ENCODE measurements at regions of chr6 and their contacts with region 1.

Region 1: GRCh38 chr6:3068329-3069214 is at the start of gene RIPK1:
- DNase-seq: peak; percentile 95 to 97 (median 96)
- ATAC-seq: peak; percentile 87 to 92 (median 90)
- H3K4me3 ChIP-seq: peak within 1 kb of the TSS; percentile 82 to 100 (median 98)
- H3K27ac ChIP-seq: peak within 1 kb of the TSS; percentile 99 to 100 (median 100)
- H3K4me1 ChIP-seq: peaks cover 5 to 55% (median 33%) of the 10 kb centered on the region in 12 donors
- H3K27me3 ChIP-seq: no peaks in the 10 kb centered on the region
- CTCF ChIP-seq: peak in 9 of 12 donors; percentile 5 to 60 (median 41)
- POLR2A ChIP-seq: peak; percentile 50 to 87
- total RNA-seq, gene RIPK1: 5.3 to 16.3 (median 7.1) TPM

Region 2: DNA sequence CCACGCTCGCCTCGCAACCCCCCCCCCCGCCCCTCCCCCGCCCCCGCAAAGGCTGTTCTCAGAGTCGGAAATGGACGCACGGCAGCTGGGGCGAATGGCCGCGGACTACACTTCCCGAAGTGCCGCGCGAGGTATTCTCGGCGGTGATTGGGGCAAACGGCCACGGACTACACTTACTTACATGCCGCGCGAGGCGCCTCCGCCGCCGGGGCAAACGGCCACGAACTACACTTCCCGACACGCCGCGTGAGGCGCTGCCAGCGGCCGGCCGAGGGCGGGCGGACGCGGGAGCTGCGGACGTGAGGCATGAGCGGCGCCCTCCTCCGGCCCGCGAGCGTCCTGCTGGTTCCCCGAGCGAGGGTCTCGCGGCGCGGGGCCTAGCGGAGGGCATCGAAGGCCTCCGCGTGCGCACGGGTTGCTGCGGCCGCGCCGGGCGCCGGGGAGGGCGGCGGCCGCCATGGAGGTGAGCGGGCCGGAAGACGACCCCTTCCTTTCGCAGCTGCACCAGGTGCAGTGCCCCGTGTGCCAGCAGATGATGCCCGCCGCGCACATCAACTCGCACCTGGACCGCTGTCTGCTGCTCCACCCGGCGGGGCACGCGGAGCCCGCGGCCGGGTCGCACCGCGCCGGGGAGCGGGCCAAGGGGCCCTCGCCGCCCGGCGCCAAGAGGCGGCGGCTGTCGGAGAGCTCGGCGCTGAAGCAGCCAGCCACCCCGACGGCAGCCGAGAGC is 303.2 kb before region 1 on chr6 and contains the start of gene WRNIP1:
- intact Hi-C with region 1: loop called in 1 of 10 experiments (anchors 10 kb)
- DNase-seq: peak; percentile 98 to 100 (median 99)
- ATAC-seq: peak; percentile 91 to 95 (median 94)
- H3K4me3 ChIP-seq: peak within 1 kb of the TSS; percentile 71 to 94 (median 86)
- H3K27ac ChIP-seq: peak within 1 kb of the TSS; percentile 92 to 99 (median 97)
- H3K4me1 ChIP-seq: peaks cover 0 to 46% (median 33%) of the 10 kb centered on the region in 12 donors
- H3K27me3 ChIP-seq: no peaks in the 10 kb centered on the region
- CTCF ChIP-seq: peak; percentile 38 to 85 (median 68)
- POLR2A ChIP-seq: peak in 1 of 2 donors; percentile 85
- total RNA-seq, gene WRNIP1: 32.1 to 64.1 (median 34.7) TPM

Region 3: GRCh38 chr6:3109761-3110160 is 41.2 kb after region 1 on chr6:
- intact Hi-C with region 1: loop called in 1 of 10 experiments (anchors 5 kb)
- DNase-seq: no peak
- ATAC-seq: no peak
- H3K4me3 ChIP-seq: no peak overlapping the region
- H3K27ac ChIP-seq: no peak overlapping the region
- H3K4me1 ChIP-seq: no peaks in the 10 kb centered on the region
- H3K27me3 ChIP-seq: no peaks in the 10 kb centered on the region
- CTCF ChIP-seq: no peak
- POLR2A ChIP-seq: no peak